ENCODE measurements at regions of chr4 and their contacts with region 1.

Region 1: GRCh38 chr4:1683736-1684505 is at the start of gene FAM53A:
- DNase-seq: peak; percentile 79
- H3K4me3 ChIP-seq: peak within 1 kb of the TSS; percentile 56 to 65 (median 62)
- H3K27ac ChIP-seq: no peak within 1 kb of the TSS
- H3K4me1 ChIP-seq: peaks cover 17% of the 10 kb centered on the region
- H3K27me3 ChIP-seq: no peaks in the 10 kb centered on the region
- CTCF ChIP-seq: no peak
- total RNA-seq, gene FAM53A: 3.3 to 3.7 TPM

Region 2: DNA sequence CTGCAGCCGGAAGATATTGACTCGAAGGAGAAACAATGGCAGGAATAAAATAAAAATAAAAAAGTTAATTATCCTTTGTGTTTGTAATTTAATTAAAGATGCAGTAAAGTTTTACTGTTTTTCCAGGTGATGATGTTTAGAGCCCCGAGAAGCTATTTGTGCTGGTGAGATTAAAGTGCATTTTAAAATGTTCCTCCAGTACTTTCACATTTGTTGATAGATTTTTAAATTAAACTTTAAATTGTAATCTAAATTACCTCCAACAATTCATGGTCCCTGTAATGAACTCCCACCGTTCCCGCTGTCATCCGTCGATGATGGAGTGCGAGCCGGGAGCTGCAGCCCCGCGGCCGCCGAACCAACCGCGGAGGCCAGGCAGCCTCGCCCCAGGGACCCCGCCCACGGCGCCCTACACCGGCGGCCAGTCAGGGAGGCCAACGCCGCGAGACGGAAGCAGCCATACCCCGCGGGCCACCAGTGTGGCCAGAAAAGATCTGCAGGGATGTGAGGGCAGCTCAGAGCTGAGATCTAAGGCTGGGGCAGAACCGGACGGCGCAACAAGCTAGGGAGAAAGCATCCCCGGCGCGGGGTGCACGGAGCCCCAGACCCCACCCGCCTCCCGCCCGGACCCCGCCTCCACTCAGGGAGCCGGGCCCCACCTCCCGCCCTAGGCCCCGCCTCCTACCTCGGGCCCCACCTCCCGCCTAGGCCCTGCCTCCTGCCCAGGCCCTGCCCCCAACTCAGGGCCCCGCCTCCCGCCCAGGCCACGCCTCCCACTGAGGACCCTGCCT is 103.8 kb before region 1 on chr4:
- CTCF ChIA-PET with region 1: no interaction called
- dilution Hi-C with region 1: no loop called
- in situ Hi-C with region 1: no loop called
- intact Hi-C with region 1: loop called (anchors 5 kb)
- DNase-seq: peak; percentile 72
- H3K4me3 ChIP-seq: peak overlapping the region; percentile 54 to 88 (median 63)
- H3K27ac ChIP-seq: no peak overlapping the region
- H3K4me1 ChIP-seq: peaks cover 10% of the 10 kb centered on the region
- H3K27me3 ChIP-seq: no peaks in the 10 kb centered on the region
- CTCF ChIP-seq: no peak

Region 3: GRCh38 chr4:1644891-1645657 is 38.8 kb before region 1 on chr4:
- CTCF ChIA-PET with region 1: no interaction called
- dilution Hi-C with region 1: no loop called
- in situ Hi-C with region 1: no loop called
- intact Hi-C with region 1: loop called (anchors 2 kb)
- DNase-seq: peak; percentile 62
- H3K4me3 ChIP-seq: no peak overlapping the region
- H3K27ac ChIP-seq: no peak overlapping the region
- H3K4me1 ChIP-seq: peaks cover 13% of the 10 kb centered on the region
- H3K27me3 ChIP-seq: peaks cover 2% of the 10 kb centered on the region
- CTCF ChIP-seq: peak in 1 of 2 donors; percentile 4

Region 4: DNA sequence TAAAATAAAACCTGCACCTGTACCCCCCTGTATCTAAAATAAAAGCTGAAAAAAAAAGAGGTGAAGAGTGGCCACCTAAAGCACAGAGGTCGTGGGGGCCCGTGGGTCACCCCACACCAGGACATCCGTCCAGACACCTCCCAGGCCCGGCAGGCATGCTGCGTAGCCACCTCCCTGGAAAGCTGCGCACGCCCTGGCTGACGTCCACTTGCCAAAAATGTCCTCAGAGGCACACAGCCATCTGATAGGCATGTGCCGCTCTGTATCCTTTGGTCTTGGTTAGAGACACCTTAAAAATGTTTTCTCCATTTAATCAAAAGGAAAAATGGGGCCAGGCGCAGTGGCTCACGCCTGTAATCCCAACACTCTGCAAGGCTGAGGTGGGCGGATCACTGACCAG is 17.5 kb before region 1 on chr4:
- CTCF ChIA-PET with region 1: no interaction called
- dilution Hi-C with region 1: no loop called
- in situ Hi-C with region 1: no loop called
- intact Hi-C with region 1: no loop called
- DNase-seq: no peak
- H3K4me3 ChIP-seq: no peak overlapping the region
- H3K27ac ChIP-seq: no peak overlapping the region
- H3K4me1 ChIP-seq: no peaks in the 10 kb centered on the region
- H3K27me3 ChIP-seq: no peaks in the 10 kb centered on the region
- CTCF ChIP-seq: no peak